H1 (cell line): ENCODE measurements at regions of chr12 and their contacts with region 1.

Region 1: DNA sequence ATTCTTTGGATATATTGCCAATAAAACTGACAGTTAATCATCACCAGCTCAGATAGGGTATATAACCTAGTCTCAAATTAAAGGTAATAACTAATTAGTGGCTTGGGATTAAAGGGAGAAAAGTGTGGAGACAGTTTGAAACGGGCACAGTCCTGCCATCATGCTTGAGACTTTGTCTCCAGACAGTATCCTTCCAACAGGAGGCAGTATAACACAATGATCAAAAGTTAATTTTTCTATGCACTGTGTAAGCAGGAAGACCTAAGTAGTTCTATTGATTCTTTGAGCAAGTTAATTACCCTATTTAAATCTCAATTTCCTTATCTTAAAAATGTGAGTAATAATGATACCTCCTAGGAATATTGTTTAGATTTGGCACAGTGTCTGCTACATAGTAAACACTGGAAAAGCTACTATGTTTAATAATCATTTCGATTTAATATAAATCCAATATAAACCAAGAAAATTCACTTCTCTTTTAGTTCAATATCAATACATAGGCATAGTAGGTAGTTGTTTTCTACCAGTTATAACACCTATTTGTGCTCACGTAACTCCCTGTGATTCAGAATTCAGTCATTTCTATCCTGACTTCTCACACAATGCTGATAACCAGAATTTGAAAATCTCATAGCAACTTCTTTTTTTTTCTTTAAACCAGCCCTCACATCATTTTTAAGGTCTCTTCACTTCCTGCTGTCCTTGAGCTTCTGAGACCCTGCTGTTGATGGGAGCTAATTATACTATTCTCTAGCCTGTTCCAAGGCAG is 53.7 kb downstream of the GALNT4 start:
- DNase-seq: no peak
- H3K4me3 ChIP-seq: no peak overlapping the region
- H3K27ac ChIP-seq: no peak overlapping the region
- H3K4me1 ChIP-seq: no peaks in the 10 kb centered on the region
- H3K27me3 ChIP-seq: no peaks in the 10 kb centered on the region
- CTCF ChIP-seq: peak in 2 of 3 experiments; percentile 42 to 64; a peak in 2 of 4 replicates
- EP300 ChIP-seq: no peak
- POLR2A ChIP-seq: no peak
- RAD21 ChIP-seq: peak; percentile 73 to 77

Region 2: DNA sequence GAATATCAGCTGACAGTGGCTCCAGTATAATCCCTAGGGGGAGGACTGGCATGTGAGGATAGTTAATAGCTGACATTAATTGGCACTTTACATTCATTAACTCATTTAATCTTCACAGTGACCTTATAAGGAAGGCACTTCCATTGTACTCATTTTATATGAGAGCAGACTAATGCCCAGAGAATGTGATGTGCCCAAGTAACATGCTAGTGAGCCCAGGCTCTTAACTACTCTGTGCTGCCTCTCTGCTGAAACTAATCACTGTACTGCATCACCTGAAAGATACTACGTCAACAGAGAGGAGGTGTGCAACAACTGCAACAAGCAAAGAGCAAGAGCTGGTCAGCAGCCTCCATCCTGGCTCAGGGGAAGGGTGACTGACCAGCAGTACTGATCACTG is 13.5 kb after region 1 on chr12:
- CTCF ChIA-PET with region 1: interaction called, 23 read pairs
- POLR2A ChIA-PET with region 1: no interaction called
- DNase-seq: no peak
- H3K4me3 ChIP-seq: no peak overlapping the region
- H3K27ac ChIP-seq: no peak overlapping the region
- H3K4me1 ChIP-seq: no peaks in the 10 kb centered on the region; a peak in 1 of 7 replicates
- H3K27me3 ChIP-seq: no peaks in the 10 kb centered on the region
- CTCF ChIP-seq: no peak
- EP300 ChIP-seq: no peak
- POLR2A ChIP-seq: no peak
- RAD21 ChIP-seq: no peak

Region 3: GRCh38 chr12:89517720-89518119 is 46.8 kb after region 1 on chr12:
- CTCF ChIA-PET with region 1: interaction called, 96 read pairs
- POLR2A ChIA-PET with region 1: no interaction called
- DNase-seq: no peak
- H3K4me3 ChIP-seq: no peak overlapping the region
- H3K27ac ChIP-seq: no peak overlapping the region
- H3K4me1 ChIP-seq: peaks cover 0 to 3% (median 2%) of the 10 kb centered on the region in 4 experiments; a peak in 3 of 7 replicates
- H3K27me3 ChIP-seq: no peaks in the 10 kb centered on the region
- CTCF ChIP-seq: no peak
- EP300 ChIP-seq: no peak
- POLR2A ChIP-seq: no peak
- RAD21 ChIP-seq: no peak

Region 4: DNA sequence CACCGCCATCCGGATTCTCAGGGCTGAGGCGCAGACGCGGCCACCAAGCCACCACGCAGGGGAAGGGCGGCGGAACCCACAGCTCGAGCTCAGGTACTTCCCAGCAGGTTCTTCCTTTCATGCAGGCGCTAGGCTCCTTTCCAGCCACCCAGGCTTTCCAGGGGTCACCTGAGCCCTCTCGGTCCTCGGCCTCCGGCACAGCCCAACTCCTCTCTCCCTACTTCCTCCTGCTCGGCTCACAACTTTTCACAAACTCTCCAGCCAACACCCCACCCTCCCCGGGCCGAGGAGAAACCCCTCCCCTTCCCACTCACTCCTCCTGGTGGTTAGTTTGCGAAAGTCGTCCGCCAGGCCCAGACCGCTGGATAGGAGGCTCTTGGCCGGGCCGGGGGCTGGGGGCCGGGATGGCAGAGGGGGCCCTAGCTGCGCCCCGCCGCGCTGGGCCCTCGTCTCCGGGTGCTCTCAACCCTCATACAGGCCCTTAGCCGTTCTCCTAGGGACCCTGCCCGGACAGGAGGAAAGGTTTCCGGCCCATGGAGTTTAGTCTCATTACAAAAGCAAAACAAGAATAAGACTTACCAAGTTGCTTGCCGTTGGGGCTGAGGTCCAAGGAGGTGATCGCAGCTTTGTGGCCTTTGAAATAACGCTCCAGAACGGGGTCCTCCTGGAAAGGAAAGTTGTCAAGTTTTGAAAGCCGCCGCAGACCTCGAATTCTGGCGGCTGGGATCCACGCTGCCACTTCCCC is 53.8 kb after region 1 on chr12 and contains the start of gene GALNT4:
- CTCF ChIA-PET with region 1: interaction called, 96 read pairs
- POLR2A ChIA-PET with region 1: interaction called, 3 read pairs
- DNase-seq: peak; percentile 47 to 88
- H3K4me3 ChIP-seq: peak within 1 kb of the TSS; percentile 76 to 92 (median 84)
- H3K27ac ChIP-seq: no peak within 1 kb of the TSS
- H3K4me1 ChIP-seq: peaks cover 0 to 3% (median 1%) of the 10 kb centered on the region in 4 experiments; a peak in 2 of 7 replicates
- H3K27me3 ChIP-seq: no peaks in the 10 kb centered on the region
- CTCF ChIP-seq: peak; percentile 59 to 78 (median 71)
- EP300 ChIP-seq: no peak
- POLR2A ChIP-seq: peak in 1 of 2 experiments; percentile 66; a peak in 1 of 3 replicates
- RAD21 ChIP-seq: peak; percentile 45 to 61
- total RNA-seq, gene GALNT4: 3.3 and 3.6 TPM in 2 replicates

Region 5: DNA sequence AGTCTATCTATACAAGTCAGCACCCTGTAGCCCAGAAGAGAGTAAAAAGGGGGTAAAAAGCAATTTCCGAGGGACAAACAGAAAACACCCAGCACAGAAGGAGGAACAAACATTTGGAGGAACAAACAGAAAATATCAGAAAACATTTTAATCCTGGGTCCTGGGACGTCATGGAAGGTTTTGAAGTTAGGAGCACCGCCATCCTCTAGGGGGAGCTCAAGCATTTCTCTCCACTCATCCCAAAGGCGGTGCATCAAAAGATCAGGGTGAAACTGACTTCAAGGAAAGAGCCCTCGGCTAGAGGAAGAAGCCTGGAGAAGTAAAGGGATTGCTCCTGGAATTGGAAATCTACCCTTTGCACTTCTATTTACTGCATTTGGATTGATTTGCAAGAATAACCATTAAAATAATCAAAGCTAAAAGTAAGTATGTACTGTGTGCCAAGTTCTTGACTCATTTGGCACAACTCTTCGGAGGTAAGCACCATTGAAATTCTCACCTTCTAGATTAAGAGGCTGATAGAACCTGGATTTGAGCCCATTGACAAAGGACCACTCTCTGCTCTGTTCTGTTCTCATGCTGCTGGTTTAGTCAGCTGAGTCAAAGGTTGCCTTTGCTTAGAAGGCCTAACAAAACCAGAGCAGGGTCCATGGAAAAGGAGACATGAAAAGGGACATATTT is 72.1 kb after region 1 on chr12:
- CTCF ChIA-PET with region 1: interaction called, 10 read pairs
- POLR2A ChIA-PET with region 1: no interaction called
- DNase-seq: peak; percentile 53 to 79
- H3K4me3 ChIP-seq: no peak overlapping the region
- H3K27ac ChIP-seq: no peak overlapping the region
- H3K4me1 ChIP-seq: no peaks in the 10 kb centered on the region; a peak in 1 of 7 replicates
- H3K27me3 ChIP-seq: no peaks in the 10 kb centered on the region
- CTCF ChIP-seq: peak; percentile 65 to 90 (median 77)
- EP300 ChIP-seq: no peak
- POLR2A ChIP-seq: no peak
- RAD21 ChIP-seq: peak; percentile 96 to 97

Region 6: DNA sequence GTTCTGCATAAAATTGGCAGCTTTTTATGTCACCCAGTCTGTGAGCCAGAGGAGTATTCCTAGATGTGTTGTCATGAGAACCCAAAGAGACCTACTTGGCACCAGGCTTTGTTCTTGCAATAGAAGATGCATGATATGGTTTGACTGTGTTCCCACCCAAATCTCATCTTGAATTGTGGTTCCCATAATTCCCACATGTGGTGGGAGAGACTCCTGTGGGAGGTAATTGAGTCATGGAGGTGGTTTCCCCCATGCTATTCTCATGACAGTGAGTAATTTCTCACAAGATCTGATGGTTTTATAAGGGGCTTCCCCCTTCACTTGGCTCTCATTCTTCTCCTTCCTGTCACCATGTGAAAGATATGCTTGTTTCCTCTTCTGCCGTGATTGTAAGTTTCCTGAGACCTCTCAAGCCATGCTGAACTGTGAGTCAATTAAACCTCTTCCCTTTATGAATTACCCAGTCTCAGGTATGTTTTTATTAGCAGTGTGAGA is 809.7 kb after region 1 on chr12:
- CTCF ChIA-PET with region 1: no interaction called
- POLR2A ChIA-PET with region 1: no interaction called
- DNase-seq: no peak
- H3K4me3 ChIP-seq: no peak overlapping the region
- H3K27ac ChIP-seq: no peak overlapping the region
- H3K4me1 ChIP-seq: no peaks in the 10 kb centered on the region
- H3K27me3 ChIP-seq: no peaks in the 10 kb centered on the region
- CTCF ChIP-seq: no peak
- EP300 ChIP-seq: no peak
- POLR2A ChIP-seq: no peak
- RAD21 ChIP-seq: no peak